ENCODE measurements at regions of chr5 and their contacts with region 1.

Region 1: GRCh38 chr5:179697993-179698934 is 503 bp upstream of the CANX start:
- DNase-seq: peak; percentile 94 to 99 (median 99)
- ATAC-seq: peak; percentile 93
- H3K4me3 ChIP-seq: peak overlapping the region; percentile 72
- H3K4me3 Mint-ChIP-seq: peak overlapping the region; percentile 89 to 97 (median 96)
- H3K27ac ChIP-seq: peak overlapping the region; percentile 100
- H3K27ac Mint-ChIP-seq: peak overlapping the region; percentile 94 to 100 (median 98)
- H3K4me1 ChIP-seq: peaks cover 21 to 25% of the 10 kb centered on the region in 2 donors
- H3K4me1 Mint-ChIP-seq: peaks cover 23 to 53% (median 46%) of the 10 kb centered on the region in 7 donors
- H3K27me3 ChIP-seq: no peaks in the 10 kb centered on the region
- H3K27me3 Mint-ChIP-seq: no peaks in the 10 kb centered on the region

Region 2: GRCh38 chr5:179559284-179560252 is 138.7 kb before region 1 on chr5:
- CTCF ChIA-PET with region 1: no interaction called
- POLR2A ChIA-PET with region 1: interaction called, 4 read pairs
- intact Hi-C with region 1: loop called (anchors 2 kb)
- DNase-seq: peak; percentile 77 to 97 (median 86)
- ATAC-seq: peak; percentile 100
- H3K4me3 ChIP-seq: peak overlapping the region; percentile 75
- H3K4me3 Mint-ChIP-seq: peak overlapping the region; percentile 85 to 95 (median 91)
- H3K27ac ChIP-seq: peak overlapping the region; percentile 70
- H3K27ac Mint-ChIP-seq: peak overlapping the region; percentile 81 to 96 (median 93)
- H3K4me1 ChIP-seq: peaks cover 3 to 4% of the 10 kb centered on the region in 2 donors
- H3K4me1 Mint-ChIP-seq: peaks cover 11 to 46% (median 32%) of the 10 kb centered on the region in 7 donors
- H3K27me3 ChIP-seq: no peaks in the 10 kb centered on the region
- H3K27me3 Mint-ChIP-seq: no peaks in the 10 kb centered on the region

Region 3: GRCh38 chr5:179763215-179763945 is 65.1 kb after region 1 on chr5:
- CTCF ChIA-PET with region 1: interaction called, 3 read pairs
- POLR2A ChIA-PET with region 1: interaction called, 3 read pairs
- intact Hi-C with region 1: loop called in 1 of 2 experiments (anchors 2 kb)
- DNase-seq: peak in 8 of 9 donors; percentile 32 to 64 (median 51)
- ATAC-seq: peak; percentile 75
- H3K4me3 ChIP-seq: no peak overlapping the region
- H3K4me3 Mint-ChIP-seq: peak overlapping the region in 2 of 10 donors; percentile 12 to 29
- H3K27ac ChIP-seq: no peak overlapping the region
- H3K27ac Mint-ChIP-seq: peak overlapping the region in 6 of 9 donors; percentile 10 to 90 (median 49)
- H3K4me1 ChIP-seq: peaks cover 7 to 13% of the 10 kb centered on the region in 2 donors
- H3K4me1 Mint-ChIP-seq: peaks cover 48 to 70% (median 57%) of the 10 kb centered on the region in 7 donors
- H3K27me3 ChIP-seq: no peaks in the 10 kb centered on the region
- H3K27me3 Mint-ChIP-seq: no peaks in the 10 kb centered on the region

Region 4: GRCh38 chr5:179821581-179822432 is 123.5 kb after region 1 on chr5:
- CTCF ChIA-PET with region 1: no interaction called
- POLR2A ChIA-PET with region 1: interaction called, 3 read pairs
- intact Hi-C with region 1: loop called in 1 of 2 experiments (anchors 1 kb)
- DNase-seq: peak; percentile 72 to 88 (median 85)
- ATAC-seq: peak; percentile 73
- H3K4me3 ChIP-seq: peak overlapping the region; percentile 87
- H3K4me3 Mint-ChIP-seq: peak overlapping the region; percentile 88 to 98 (median 95)
- H3K27ac ChIP-seq: peak overlapping the region; percentile 96
- H3K27ac Mint-ChIP-seq: peak overlapping the region; percentile 79 to 97 (median 94)
- H3K4me1 ChIP-seq: peaks cover 31 to 36% of the 10 kb centered on the region in 2 donors
- H3K4me1 Mint-ChIP-seq: peaks cover 30 to 62% (median 45%) of the 10 kb centered on the region in 7 donors
- H3K27me3 ChIP-seq: no peaks in the 10 kb centered on the region
- H3K27me3 Mint-ChIP-seq: no peaks in the 10 kb centered on the region

Region 5: DNA sequence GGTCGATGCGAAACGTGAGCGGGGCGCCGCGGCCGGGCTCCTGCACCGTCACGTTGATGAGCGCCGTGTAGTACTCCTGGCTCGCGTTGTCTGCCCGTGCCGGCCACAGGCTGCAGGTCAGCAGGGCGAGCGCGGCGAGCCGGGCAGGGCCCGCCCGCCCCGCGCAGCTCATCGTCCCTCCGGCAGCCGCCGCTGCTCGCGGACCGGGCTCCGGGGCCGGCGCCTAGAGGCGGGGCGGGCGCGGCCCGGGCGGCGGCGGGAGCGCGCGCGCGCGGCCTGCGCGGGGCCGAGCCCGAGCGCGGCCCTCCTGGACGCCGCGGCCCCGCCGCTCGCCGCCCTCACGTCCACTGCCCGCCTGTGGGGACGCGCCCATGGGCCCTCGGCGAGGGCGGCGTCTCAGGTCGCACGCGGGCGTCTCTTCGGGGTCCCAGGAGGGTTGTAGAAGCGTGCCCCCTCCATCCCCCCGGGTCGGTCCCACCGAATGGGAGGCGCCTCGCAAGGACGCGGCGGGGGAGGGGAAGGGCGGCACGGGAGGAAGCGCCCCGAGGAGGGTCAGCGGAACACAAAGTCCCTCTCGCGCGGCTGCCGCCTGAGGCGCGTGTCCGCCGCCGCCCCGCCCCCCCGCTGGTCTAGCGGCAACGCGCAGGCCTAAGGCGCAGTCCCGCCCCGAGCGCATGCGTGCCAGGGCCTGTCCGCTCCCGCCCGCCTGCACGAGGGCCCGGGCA is 373.4 kb after region 1 on chr5 and contains the start of gene RNF130:
- CTCF ChIA-PET with region 1: no interaction called
- POLR2A ChIA-PET with region 1: no interaction called
- intact Hi-C with region 1: loop called in 1 of 2 experiments (anchors 1 kb)
- DNase-seq: peak; percentile 64 to 91 (median 77)
- ATAC-seq: peak; percentile 88
- H3K4me3 ChIP-seq: peak within 1 kb of the TSS; percentile 62
- H3K4me3 Mint-ChIP-seq: peak within 1 kb of the TSS; percentile 80 to 93 (median 91)
- H3K27ac ChIP-seq: peak within 1 kb of the TSS; percentile 76
- H3K27ac Mint-ChIP-seq: peak within 1 kb of the TSS in 8 of 9 donors; percentile 78 to 95 (median 90)
- H3K4me1 ChIP-seq: peaks cover 6 to 21% of the 10 kb centered on the region in 2 donors
- H3K4me1 Mint-ChIP-seq: peaks cover 10 to 47% (median 38%) of the 10 kb centered on the region in 7 donors
- H3K27me3 ChIP-seq: no peaks in the 10 kb centered on the region
- H3K27me3 Mint-ChIP-seq: peaks cover 0 to 50% (median 0%) of the 10 kb centered on the region in 5 donors
- total RNA-seq, gene RNF130: 3.6 to 76.3 (median 23.3) TPM

Measured in naive thymus-derived CD4-positive, alpha-beta T cell (primary cell).